ENCODE measurements at regions of chr2 and their contacts with region 1.

Region 1: DNA sequence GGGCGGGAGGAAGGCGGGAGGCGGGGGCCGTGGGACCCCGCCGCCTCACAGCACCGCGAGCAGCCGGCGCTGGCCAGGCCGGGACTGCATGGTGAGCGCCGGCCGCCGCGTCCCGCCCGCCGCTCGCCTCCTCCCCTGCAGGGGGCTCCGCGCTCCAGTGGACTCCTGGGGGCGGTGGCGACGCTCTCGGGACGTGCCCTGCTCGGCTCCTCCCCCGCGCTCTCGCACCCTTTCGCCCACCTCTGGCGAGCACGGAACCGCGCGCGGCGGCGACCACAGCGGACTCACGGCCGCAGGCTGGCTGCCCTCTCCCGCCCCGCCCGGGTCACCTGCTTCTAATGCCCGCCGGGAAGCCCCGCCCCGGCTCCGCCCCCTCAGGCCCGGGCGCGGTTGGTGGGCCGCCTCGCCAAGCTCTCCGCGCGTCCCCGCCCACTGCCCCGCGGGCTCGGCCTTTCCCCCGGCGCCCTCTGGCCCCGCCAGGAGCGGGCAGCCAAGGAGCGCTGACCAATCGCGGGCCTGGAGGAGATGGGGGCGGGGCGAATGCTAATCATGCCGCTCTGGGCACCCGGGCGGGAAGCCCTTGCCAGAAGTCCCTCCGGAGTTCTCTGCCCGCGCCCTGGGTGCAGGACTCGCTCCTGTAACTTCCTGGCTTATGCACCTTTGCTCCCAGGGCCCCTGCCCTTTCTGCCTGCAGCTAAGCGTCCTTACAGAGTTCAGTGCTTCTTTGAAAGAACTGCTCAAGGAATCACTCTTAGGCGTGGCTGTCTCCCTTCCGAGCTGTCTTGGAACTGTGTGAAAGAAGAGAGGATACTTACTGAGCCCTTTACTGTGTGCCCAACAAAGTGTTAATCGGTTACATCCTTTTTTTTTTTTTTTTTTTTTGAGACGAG is at the start of gene FZD5:
- DNase-seq: peak; percentile 72
- H3K4me3 ChIP-seq: peak within 1 kb of the TSS; percentile 65
- H3K27ac ChIP-seq: peak within 1 kb of the TSS; percentile 31
- H3K4me1 ChIP-seq: peaks cover 10% of the 10 kb centered on the region
- H3K27me3 ChIP-seq: no peaks in the 10 kb centered on the region
- CTCF ChIP-seq: peak; percentile 30
- total RNA-seq, gene FZD5: 0.86 and 1.8 TPM in 2 replicates

Region 2: GRCh38 chr2:207974216-207974605 is 204.4 kb after region 1 on chr2:
- CTCF ChIA-PET with region 1: no interaction called
- POLR2A ChIA-PET with region 1: no interaction called
- intact Hi-C with region 1: loop called (anchors 2 kb)
- DNase-seq: no peak
- H3K4me3 ChIP-seq: no peak overlapping the region
- H3K27ac ChIP-seq: no peak overlapping the region
- H3K4me1 ChIP-seq: peaks cover 11% of the 10 kb centered on the region
- H3K27me3 ChIP-seq: no peaks in the 10 kb centered on the region
- CTCF ChIP-seq: no peak

Region 3: GRCh38 chr2:208072250-208072892 is 302.5 kb after region 1 on chr2:
- CTCF ChIA-PET with region 1: no interaction called
- POLR2A ChIA-PET with region 1: no interaction called
- intact Hi-C with region 1: loop called (anchors 5 kb)
- DNase-seq: peak; percentile 60
- H3K4me3 ChIP-seq: no peak overlapping the region
- H3K27ac ChIP-seq: no peak overlapping the region
- H3K4me1 ChIP-seq: peaks cover 4% of the 10 kb centered on the region
- H3K27me3 ChIP-seq: no peaks in the 10 kb centered on the region
- CTCF ChIP-seq: peak; percentile 84